Esophagus squamous epithelium (tissue), 5 donors: ENCODE measurements at regions of chr14 and their contacts with region 1.

Region 1: GRCh38 chr14:73472185-73473114 is 14.1 kb upstream of the NUMB start:
- DNase-seq: no peak
- H3K4me3 ChIP-seq: no peak overlapping the region
- H3K27ac ChIP-seq: no peak overlapping the region
- H3K4me1 ChIP-seq: peaks cover 0 to 4% (median 0%) of the 10 kb centered on the region in 3 donors
- H3K27me3 ChIP-seq: no peaks in the 10 kb centered on the region
- CTCF ChIP-seq: peak; percentile 32 to 86 (median 73)
- POLR2A ChIP-seq: no peak

Region 2: DNA sequence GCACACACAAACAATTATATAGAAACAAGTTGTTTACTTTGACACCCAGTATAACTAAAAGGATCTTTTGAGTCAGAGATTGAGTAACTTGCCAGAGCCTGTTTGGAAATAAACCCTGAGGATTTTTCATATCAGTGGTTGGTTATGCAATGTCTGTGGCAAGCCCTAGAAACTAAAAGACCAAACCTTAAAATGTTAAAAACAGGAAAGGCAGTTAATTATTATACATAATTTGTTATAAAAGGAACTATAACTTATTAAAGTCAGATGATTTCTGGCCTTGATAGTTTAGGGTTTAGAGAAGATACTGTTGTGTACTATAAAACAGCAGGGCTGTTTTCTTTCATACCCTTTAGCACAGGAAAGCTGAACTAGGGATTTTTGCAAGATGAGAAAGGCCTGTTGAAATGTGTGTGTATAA is 292.1 kb before region 1 on chr14:
- intact Hi-C with region 1: loop called (anchors 10 kb)
- DNase-seq: no peak
- H3K4me3 ChIP-seq: no peak overlapping the region
- H3K27ac ChIP-seq: peak overlapping the region; percentile 70 to 86 (median 81)
- H3K4me1 ChIP-seq: peaks cover 0 to 26% (median 18%) of the 10 kb centered on the region in 3 donors
- H3K27me3 ChIP-seq: no peaks in the 10 kb centered on the region
- CTCF ChIP-seq: no peak
- POLR2A ChIP-seq: no peak

Region 3: DNA sequence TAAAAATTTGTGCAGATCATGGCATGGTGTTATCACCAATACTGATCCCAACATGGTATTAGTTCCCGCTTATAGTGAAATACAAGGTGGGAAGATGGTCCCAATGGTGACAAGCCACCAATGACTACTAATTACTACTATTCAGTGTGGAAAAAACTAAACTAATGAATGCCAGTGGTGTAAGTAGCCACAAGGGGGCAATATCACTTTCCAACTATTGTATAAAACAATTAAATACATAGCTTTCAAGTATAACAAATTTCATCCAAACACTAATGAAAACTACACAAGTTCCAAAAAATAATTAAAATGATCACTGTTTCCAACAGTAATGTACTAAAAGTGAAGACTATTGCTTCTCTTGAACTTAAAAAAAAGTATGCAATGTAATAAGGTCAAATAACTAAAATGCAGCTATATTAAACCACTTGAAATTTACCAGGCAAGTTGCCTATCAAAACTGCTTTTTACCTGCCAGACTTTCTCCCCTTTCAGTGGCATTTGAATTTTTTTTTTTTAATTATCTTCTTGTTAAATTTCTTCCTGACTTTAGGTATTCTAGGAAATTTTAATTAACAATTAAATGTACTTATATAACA is 177.2 kb before region 1 on chr14:
- intact Hi-C with region 1: loop called (anchors 5 kb)
- DNase-seq: no peak
- H3K4me3 ChIP-seq: no peak overlapping the region
- H3K27ac ChIP-seq: no peak overlapping the region
- H3K4me1 ChIP-seq: peaks cover 0 to 2% (median 0%) of the 10 kb centered on the region in 3 donors
- H3K27me3 ChIP-seq: no peaks in the 10 kb centered on the region
- CTCF ChIP-seq: peak; percentile 36 to 74 (median 66)
- POLR2A ChIP-seq: no peak

Region 4: GRCh38 chr14:73576391-73576790 is 103.9 kb after region 1 on chr14:
- intact Hi-C with region 1: no loop called
- DNase-seq: no peak
- H3K4me3 ChIP-seq: no peak overlapping the region
- H3K27ac ChIP-seq: no peak overlapping the region
- H3K4me1 ChIP-seq: no peaks in the 10 kb centered on the region
- H3K27me3 ChIP-seq: no peaks in the 10 kb centered on the region
- CTCF ChIP-seq: no peak
- POLR2A ChIP-seq: no peak